Activated naive CD4-positive, alpha-beta T cell treated with anti-CD3 and anti-CD28 coated beads, Interleukin-2, amount 10 ng/mL, durations not matched to agents 7 days and 5 days (primary cell): ENCODE measurements at regions of chr11 and their contacts with region 1.

Region 1: DNA sequence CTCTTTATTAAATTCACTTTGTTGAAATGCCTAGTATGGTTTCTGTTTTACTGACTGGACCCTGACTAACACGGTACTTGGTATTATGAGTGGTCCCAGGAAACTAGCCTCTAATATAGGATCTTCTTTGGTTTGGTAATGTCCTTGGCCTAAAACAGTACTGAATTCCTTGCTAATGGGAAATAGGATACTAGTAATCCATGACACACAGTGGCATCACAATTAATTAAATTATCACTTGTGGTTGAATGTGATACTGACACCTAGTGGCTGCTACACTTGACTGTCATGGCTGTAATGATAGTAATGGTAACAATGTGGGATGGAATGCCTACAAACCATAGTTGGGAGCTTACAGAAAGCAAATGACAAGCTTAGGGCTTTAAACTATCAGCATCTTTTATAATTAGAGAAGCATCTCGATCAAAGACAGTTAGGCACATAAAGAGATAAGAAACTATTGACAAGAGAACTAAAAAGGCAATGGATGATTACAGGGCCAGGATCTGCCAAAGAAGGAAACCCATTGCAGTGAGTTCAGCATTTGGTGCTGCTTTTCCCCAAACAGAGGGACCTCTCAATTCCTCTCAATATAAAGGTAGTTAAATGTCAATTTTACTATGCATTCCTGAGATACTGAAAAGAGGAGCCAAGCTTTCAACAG is 8.6 kb downstream of the DNHD1 start:
- DNase-seq: no peak
- H3K4me3 Mint-ChIP-seq: no peak overlapping the region
- H3K27ac Mint-ChIP-seq: no peak overlapping the region
- H3K4me1 Mint-ChIP-seq: peaks cover 3% of the 10 kb centered on the region
- H3K27me3 Mint-ChIP-seq: no peaks in the 10 kb centered on the region

Region 2: DNA sequence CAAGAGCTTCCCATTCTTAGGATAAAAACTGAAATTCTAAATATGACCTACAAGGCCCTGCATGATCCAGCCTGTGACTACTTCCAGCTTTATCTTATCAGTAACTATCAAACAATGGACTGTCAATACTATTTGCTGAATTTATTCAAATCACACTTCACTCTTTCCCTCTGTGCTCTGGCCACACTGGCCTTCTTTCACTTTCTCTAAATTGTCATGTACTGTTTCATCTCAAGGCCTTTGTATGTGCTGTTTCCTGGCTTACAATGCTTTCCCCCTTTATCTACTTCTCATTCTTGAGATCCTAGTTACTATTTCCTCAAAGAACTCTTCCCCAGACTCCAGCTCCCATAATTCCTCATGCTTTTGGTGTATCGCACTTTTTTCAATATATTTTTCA is 18.8 kb before region 1 on chr11:
- CTCF ChIA-PET with region 1: interaction called, 17 read pairs
- DNase-seq: no peak
- H3K4me3 Mint-ChIP-seq: no peak overlapping the region
- H3K27ac Mint-ChIP-seq: no peak overlapping the region
- H3K4me1 Mint-ChIP-seq: peaks cover 14% of the 10 kb centered on the region
- H3K27me3 Mint-ChIP-seq: no peaks in the 10 kb centered on the region